H1 (cell line): ENCODE measurements at regions of chr5 and their contacts with region 1.

Region 1: GRCh38 chr5:34486160-34486848 is 169.8 kb upstream of the RAI14 start:
- DNase-seq: peak in 1 of 2 experiments; percentile 90
- H3K4me3 ChIP-seq: no peak overlapping the region
- H3K27ac ChIP-seq: no peak overlapping the region
- H3K4me1 ChIP-seq: peaks cover 6 to 26% (median 16%) of the 10 kb centered on the region in 4 experiments; a peak in 6 of 7 replicates
- H3K27me3 ChIP-seq: no peaks in the 10 kb centered on the region
- CTCF ChIP-seq: peak; percentile 59 to 84 (median 77)
- EP300 ChIP-seq: 0 out of 3 replicates have a peak, but pooled peaks of 1 of the 2 experiments have one; percentile 26
- POLR2A ChIP-seq: no peak
- RAD21 ChIP-seq: peak; percentile 93 to 97

Region 2: DNA sequence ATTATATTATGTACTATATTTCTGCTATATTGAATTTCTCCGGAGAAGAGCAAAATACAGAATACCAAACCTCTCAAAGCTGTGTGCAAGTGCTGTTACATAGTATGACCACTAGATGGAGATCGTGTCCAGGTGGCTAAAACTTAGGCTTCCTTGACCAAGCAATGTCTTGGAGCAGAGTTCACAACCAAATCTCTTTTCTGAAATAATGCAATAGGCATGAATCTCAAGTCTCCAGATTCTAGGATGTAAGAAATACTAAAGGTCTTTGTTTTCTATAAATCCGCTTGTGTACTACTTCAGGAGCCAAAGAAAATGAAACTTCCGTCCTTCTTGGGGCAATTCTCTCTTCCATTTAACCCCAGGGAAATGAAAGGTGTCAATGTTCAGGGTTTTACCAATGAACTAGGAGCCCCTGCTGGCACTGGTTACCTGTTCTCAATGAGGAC is 11.7 kb before region 1 on chr5:
- CTCF ChIA-PET with region 1: interaction called, 44 read pairs
- POLR2A ChIA-PET with region 1: interaction called, 22 read pairs
- DNase-seq: no peak
- H3K4me3 ChIP-seq: peak overlapping the region in 1 of 4 experiments; percentile 32; a peak in 1 of 8 replicates
- H3K27ac ChIP-seq: peak overlapping the region; percentile 92
- H3K4me1 ChIP-seq: peaks cover 6 to 14% (median 9%) of the 10 kb centered on the region in 4 experiments; a peak in 6 of 7 replicates
- H3K27me3 ChIP-seq: no peaks in the 10 kb centered on the region
- CTCF ChIP-seq: peak in 2 of 3 experiments; percentile 75 to 87; a peak in 3 of 4 replicates
- EP300 ChIP-seq: no peak
- POLR2A ChIP-seq: no peak
- RAD21 ChIP-seq: peak; percentile 92 to 94

Region 3: GRCh38 chr5:34499001-34499734 is 12.9 kb after region 1 on chr5:
- CTCF ChIA-PET with region 1: interaction called, 19 read pairs
- POLR2A ChIA-PET with region 1: interaction called, 3 read pairs
- DNase-seq: no peak
- H3K4me3 ChIP-seq: no peak overlapping the region
- H3K27ac ChIP-seq: no peak overlapping the region
- H3K4me1 ChIP-seq: peaks cover 0 to 6% (median 1%) of the 10 kb centered on the region in 4 experiments; a peak in 1 of 7 replicates
- H3K27me3 ChIP-seq: no peaks in the 10 kb centered on the region
- CTCF ChIP-seq: no peak
- EP300 ChIP-seq: no peak
- POLR2A ChIP-seq: no peak
- RAD21 ChIP-seq: no peak

Region 4: GRCh38 chr5:34511915-34512314 is 25.6 kb after region 1 on chr5:
- CTCF ChIA-PET with region 1: interaction called, 14 read pairs
- POLR2A ChIA-PET with region 1: interaction called, 3 read pairs
- DNase-seq: no peak
- H3K4me3 ChIP-seq: no peak overlapping the region
- H3K27ac ChIP-seq: no peak overlapping the region
- H3K4me1 ChIP-seq: peaks cover 0 to 2% (median 0%) of the 10 kb centered on the region in 4 experiments; a peak in 2 of 7 replicates
- H3K27me3 ChIP-seq: no peaks in the 10 kb centered on the region
- CTCF ChIP-seq: no peak
- EP300 ChIP-seq: no peak
- POLR2A ChIP-seq: no peak
- RAD21 ChIP-seq: no peak

Region 5: GRCh38 chr5:34522599-34523386 is 36.5 kb after region 1 on chr5:
- CTCF ChIA-PET with region 1: interaction called, 25 read pairs
- POLR2A ChIA-PET with region 1: interaction called, 4 read pairs
- DNase-seq: peak; percentile 67 to 89
- H3K4me3 ChIP-seq: no peak overlapping the region
- H3K27ac ChIP-seq: no peak overlapping the region
- H3K4me1 ChIP-seq: peaks cover 0 to 9% (median 3%) of the 10 kb centered on the region in 4 experiments; a peak in 3 of 7 replicates
- H3K27me3 ChIP-seq: no peaks in the 10 kb centered on the region
- CTCF ChIP-seq: peak; percentile 43 to 89 (median 74)
- EP300 ChIP-seq: peak in 1 of 2 experiments; percentile 37; a peak in 1 of 3 replicates
- POLR2A ChIP-seq: no peak
- RAD21 ChIP-seq: peak; percentile 90

Region 6: GRCh38 chr5:34533582-34534522 is 47.5 kb after region 1 on chr5:
- CTCF ChIA-PET with region 1: interaction called, 23 read pairs
- POLR2A ChIA-PET with region 1: no interaction called
- DNase-seq: no peak
- H3K4me3 ChIP-seq: no peak overlapping the region
- H3K27ac ChIP-seq: no peak overlapping the region
- H3K4me1 ChIP-seq: peaks cover 0 to 6% (median 4%) of the 10 kb centered on the region in 4 experiments; a peak in 4 of 7 replicates
- H3K27me3 ChIP-seq: no peaks in the 10 kb centered on the region
- CTCF ChIP-seq: no peak
- EP300 ChIP-seq: no peak
- POLR2A ChIP-seq: no peak
- RAD21 ChIP-seq: no peak

Region 7: GRCh38 chr5:34905564-34905963 is 419.3 kb after region 1 on chr5:
- CTCF ChIA-PET with region 1: interaction called, 17 read pairs
- POLR2A ChIA-PET with region 1: interaction called, 3 read pairs
- DNase-seq: no peak
- H3K4me3 ChIP-seq: no peak overlapping the region
- H3K27ac ChIP-seq: no peak overlapping the region
- H3K4me1 ChIP-seq: no peaks in the 10 kb centered on the region
- H3K27me3 ChIP-seq: no peaks in the 10 kb centered on the region
- CTCF ChIP-seq: peak in 2 of 3 experiments; percentile 20 to 34; a peak in 2 of 4 replicates
- EP300 ChIP-seq: no peak
- POLR2A ChIP-seq: no peak
- RAD21 ChIP-seq: peak; percentile 43 to 53